Naive thymus-derived CD4-positive, alpha-beta T cell (primary cell): ENCODE measurements at regions of chr1 and their contacts with region 1.

Region 1: DNA sequence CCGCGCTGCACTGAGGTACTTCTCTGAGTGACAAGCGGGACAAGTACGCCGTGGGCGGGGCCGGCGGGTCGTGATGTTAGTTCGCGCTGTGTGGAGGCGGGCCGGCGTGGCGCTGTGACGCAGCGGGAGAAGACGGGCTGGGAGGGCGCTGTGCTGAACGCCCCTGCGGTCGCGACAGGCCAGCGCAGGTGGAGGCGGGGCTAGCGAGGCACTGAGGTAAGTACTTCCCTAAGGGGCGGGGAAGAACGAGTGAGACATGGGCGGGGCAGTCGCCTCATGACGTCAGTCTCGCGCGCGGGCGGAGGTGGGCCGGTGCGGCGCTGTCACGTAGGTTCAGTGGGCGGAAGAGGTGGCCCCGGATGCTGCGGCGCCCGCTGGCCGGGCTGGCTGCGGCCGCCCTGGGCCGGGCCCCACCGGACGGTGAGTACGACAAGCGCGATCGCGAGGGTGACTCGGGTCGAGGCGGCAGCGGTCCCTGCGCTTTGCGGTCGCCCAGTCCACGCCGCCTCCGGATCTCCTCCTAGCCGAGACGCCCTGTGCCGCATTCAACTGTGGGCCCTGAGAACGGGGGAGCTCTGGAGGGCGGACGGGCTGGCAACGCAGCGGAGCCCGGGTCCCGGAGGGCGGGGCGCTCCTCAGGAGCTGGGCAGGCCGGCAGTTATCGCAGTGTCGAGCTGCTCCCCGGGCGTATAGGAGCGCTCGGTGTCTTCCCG is at the start of gene GUK1:
- DNase-seq: peak; percentile 98 to 100 (median 100)
- ATAC-seq: peak; percentile 93
- H3K4me3 ChIP-seq: peak within 1 kb of the TSS; percentile 88
- H3K4me3 Mint-ChIP-seq: peak within 1 kb of the TSS; percentile 87 to 99 (median 95)
- H3K27ac ChIP-seq: peak within 1 kb of the TSS; percentile 99
- H3K27ac Mint-ChIP-seq: peak within 1 kb of the TSS; percentile 83 to 100 (median 99)
- H3K4me1 ChIP-seq: peaks cover 42 to 49% of the 10 kb centered on the region in 2 donors
- H3K4me1 Mint-ChIP-seq: peaks cover 23 to 48% (median 34%) of the 10 kb centered on the region in 7 donors
- H3K27me3 ChIP-seq: no peaks in the 10 kb centered on the region
- H3K27me3 Mint-ChIP-seq: peaks cover 0 to 24% (median 0%) of the 10 kb centered on the region in 5 donors
- total RNA-seq, gene GUK1: 145 to 309 (median 279) TPM

Region 2: DNA sequence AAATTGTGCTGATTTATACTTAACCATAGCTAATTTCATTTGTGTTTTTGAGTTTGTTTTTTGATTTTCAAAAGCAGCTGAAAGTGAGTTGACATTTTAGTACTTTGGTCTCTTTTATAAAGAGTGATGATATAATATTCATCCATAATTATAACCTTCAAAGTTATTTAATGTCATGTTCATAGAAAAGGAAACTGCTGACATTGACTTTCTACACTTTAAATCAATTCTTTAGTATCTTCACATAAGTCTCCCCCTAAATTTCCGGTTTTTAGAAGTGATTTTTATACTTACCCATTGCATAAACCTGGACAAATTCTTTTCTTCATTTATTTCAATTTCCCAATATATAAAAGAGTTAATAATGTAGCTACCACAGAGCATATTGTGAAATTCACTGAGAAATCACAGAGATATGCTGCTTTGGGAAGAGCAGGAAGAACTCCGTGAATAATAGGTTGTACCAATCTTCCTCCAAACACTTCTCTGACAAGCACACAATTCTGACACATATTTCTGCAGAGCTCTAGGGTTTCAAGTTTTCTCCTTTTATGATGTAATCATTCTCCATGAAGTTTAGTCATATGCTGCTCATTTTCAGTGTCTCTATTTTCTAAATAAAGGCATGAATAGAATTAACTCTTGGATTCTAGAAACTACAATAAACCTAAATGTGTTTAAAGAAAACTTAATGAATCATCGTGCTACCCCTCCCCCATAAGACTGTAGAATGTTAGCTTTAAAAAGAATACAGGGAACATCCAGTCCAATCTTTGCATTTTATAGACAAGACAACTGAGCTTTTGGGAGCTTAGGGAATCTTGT is 796.2 kb before region 1 on chr1:
- CTCF ChIA-PET with region 1: no interaction called
- POLR2A ChIA-PET with region 1: no interaction called
- intact Hi-C with region 1: no loop called
- DNase-seq: no peak
- ATAC-seq: no peak
- H3K4me3 ChIP-seq: no peak overlapping the region
- H3K4me3 Mint-ChIP-seq: no peak overlapping the region
- H3K27ac ChIP-seq: no peak overlapping the region
- H3K27ac Mint-ChIP-seq: no peak overlapping the region
- H3K4me1 ChIP-seq: no peaks in the 10 kb centered on the region
- H3K4me1 Mint-ChIP-seq: no peaks in the 10 kb centered on the region
- H3K27me3 ChIP-seq: no peaks in the 10 kb centered on the region
- H3K27me3 Mint-ChIP-seq: peaks cover 0 to 7% (median 5%) of the 10 kb centered on the region in 5 donors

Region 3: DNA sequence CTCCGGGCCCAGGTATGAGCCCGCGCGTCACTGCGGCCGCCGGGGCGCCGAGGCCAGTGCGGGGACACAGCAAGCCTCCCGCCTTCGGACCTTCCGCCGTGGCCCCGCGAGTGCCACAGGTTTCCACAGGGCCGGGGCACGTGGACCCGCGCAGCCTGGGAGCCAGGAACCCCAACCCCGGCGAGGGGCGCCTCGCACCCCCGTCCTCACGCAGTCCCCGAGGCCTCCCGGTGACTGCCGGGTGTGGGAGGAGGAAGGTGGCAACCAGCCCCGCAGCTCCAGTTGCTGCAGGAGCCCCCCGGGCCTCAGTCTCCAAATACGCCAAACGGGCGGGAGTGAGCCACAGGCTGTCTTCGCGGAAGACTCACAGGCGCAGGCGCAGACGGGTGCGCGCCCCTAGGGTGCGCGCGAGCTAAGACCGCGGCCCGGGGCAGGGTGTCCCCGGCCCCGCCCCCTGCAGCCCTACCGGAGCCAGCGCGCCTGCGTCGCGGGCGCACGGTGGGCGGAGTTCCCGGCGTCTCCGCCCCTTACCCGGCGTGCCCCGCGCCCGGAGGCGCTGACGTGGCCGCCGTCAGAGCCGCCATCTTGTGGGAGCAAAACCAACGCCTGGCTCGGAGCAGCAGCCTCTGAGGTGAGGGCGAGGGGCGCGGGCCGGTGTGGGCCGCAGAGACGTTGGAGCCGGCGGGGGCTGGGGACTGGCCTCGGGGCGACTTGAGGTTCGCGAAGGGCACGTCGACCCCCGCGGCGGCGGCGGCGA is 57.8 kb before region 1 on chr1 and contains the start of gene ARF1:
- CTCF ChIA-PET with region 1: no interaction called
- POLR2A ChIA-PET with region 1: interaction called, 7 read pairs
- intact Hi-C with region 1: loop called (anchors 1 kb)
- DNase-seq: peak; percentile 89 to 99 (median 96)
- ATAC-seq: peak; percentile 97
- H3K4me3 ChIP-seq: peak within 1 kb of the TSS; percentile 88
- H3K4me3 Mint-ChIP-seq: peak within 1 kb of the TSS; percentile 89 to 97 (median 95)
- H3K27ac ChIP-seq: peak within 1 kb of the TSS; percentile 97
- H3K27ac Mint-ChIP-seq: peak within 1 kb of the TSS; percentile 76 to 97 (median 95)
- H3K4me1 ChIP-seq: peaks cover 41 to 43% of the 10 kb centered on the region in 2 donors
- H3K4me1 Mint-ChIP-seq: peaks cover 36 to 66% (median 52%) of the 10 kb centered on the region in 7 donors
- H3K27me3 ChIP-seq: no peaks in the 10 kb centered on the region
- H3K27me3 Mint-ChIP-seq: no peaks in the 10 kb centered on the region
- total RNA-seq, gene ARF1: 198 to 390 (median 259) TPM

Region 4: GRCh38 chr1:228109073-228109961 is 30.8 kb before region 1 on chr1 and contains the start of gene MRPL55:
- CTCF ChIA-PET with region 1: no interaction called
- POLR2A ChIA-PET with region 1: interaction called, 8 read pairs
- intact Hi-C with region 1: loop called (anchors 1 kb)
- DNase-seq: peak; percentile 97 to 100 (median 99)
- ATAC-seq: peak; percentile 99
- H3K4me3 ChIP-seq: peak within 1 kb of the TSS; percentile 100
- H3K4me3 Mint-ChIP-seq: peak within 1 kb of the TSS; percentile 87 to 95 (median 93)
- H3K27ac ChIP-seq: peak within 1 kb of the TSS; percentile 94
- H3K27ac Mint-ChIP-seq: peak within 1 kb of the TSS; percentile 88 to 98 (median 95)
- H3K4me1 ChIP-seq: peaks cover 9 to 16% of the 10 kb centered on the region in 2 donors
- H3K4me1 Mint-ChIP-seq: peaks cover 5 to 37% (median 26%) of the 10 kb centered on the region in 7 donors
- H3K27me3 ChIP-seq: no peaks in the 10 kb centered on the region
- H3K27me3 Mint-ChIP-seq: peaks cover 0 to 3% (median 0%) of the 10 kb centered on the region in 5 donors
- total RNA-seq, gene MRPL55: 34.3 to 79.3 (median 65.2) TPM

Region 5: DNA sequence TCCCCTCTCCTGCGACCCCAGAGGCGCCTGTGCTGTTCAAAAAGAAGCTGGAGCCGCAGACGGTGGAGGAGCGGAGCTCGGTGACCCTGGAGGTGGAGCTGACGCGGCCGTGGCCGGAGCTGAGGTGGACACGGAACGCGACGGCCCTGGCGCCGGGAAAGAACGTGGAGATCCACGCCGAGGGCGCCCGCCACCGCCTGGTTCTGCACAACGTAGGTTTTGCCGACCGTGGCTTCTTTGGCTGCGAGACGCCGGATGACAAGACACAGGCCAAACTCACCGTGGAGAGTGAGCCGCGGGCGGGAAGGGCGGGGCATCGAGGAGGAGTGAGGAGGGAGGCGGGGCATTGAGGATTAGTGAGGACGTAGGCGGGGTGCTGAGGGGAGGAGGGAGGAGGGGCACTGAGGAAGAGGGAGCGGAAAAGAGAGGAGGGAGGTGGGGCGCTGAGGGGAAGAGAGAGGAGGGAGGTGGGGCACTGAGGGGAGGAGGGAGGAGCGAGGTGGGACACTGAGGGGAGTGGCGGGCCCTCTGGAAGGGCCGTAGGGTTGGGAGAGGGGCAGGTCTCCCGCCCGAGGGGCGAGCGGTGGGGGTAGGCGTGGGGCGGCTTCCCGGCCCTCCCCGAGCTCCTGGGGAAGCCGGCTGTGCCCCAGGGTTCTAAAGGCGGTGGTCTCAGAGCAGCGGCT is 135.8 kb after region 1 on chr1:
- CTCF ChIA-PET with region 1: no interaction called
- POLR2A ChIA-PET with region 1: no interaction called
- intact Hi-C with region 1: loop called in 1 of 2 experiments (anchors 1 kb)
- DNase-seq: peak; percentile 53 to 88 (median 82)
- ATAC-seq: peak; percentile 96
- H3K4me3 ChIP-seq: peak overlapping the region; percentile 77
- H3K4me3 Mint-ChIP-seq: peak overlapping the region; percentile 71 to 88 (median 82)
- H3K27ac ChIP-seq: peak overlapping the region; percentile 77
- H3K27ac Mint-ChIP-seq: peak overlapping the region in 7 of 9 donors; percentile 21 to 73 (median 60)
- H3K4me1 ChIP-seq: no peaks in the 10 kb centered on the region
- H3K4me1 Mint-ChIP-seq: peaks cover 8 to 20% (median 19%) of the 10 kb centered on the region in 7 donors
- H3K27me3 ChIP-seq: no peaks in the 10 kb centered on the region
- H3K27me3 Mint-ChIP-seq: no peaks in the 10 kb centered on the region

Region 6: DNA sequence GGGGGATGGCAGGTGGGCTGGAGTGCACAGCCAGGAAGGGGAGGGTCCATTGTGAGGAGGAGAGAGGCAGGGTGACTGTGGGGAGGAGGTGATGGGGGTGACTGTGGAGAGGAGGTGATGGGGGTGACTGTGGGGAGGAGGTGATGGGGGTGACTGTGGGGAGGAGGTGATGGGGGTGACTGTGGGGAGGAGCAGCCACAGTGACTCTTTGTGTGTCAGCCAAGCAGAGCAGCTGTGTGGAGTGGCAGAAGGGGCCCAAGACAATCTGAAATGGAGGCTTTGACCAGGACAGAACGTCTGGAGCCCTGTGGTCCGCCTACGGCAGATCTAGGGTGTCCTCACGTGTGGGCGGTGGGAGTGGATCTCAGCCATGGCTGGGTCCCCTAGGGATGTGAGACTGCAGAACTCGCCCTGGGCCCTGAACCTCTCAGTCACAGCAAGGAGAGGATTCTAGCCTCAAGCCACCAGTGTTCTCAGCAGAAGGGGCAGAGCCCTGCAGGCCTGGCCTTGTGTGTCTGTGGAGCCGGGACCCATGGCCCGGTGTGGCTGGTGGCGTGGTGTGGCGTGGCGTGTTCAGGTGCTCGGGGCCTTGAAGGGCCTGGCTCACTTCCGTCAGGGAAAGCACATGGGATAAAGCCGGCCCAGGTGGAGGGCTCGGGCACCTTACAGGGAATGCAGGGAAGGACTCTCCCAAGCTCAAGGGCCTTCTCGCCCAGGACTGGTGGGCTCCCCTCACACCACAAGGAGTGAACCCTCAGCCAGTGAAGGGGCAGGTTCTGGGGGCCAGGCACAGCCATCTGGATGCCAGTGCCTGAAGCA is 149.3 kb after region 1 on chr1:
- CTCF ChIA-PET with region 1: no interaction called
- POLR2A ChIA-PET with region 1: no interaction called
- intact Hi-C with region 1: no loop called
- DNase-seq: peak in 1 of 9 donors; percentile 6
- ATAC-seq: no peak
- H3K4me3 ChIP-seq: no peak overlapping the region
- H3K4me3 Mint-ChIP-seq: no peak overlapping the region
- H3K27ac ChIP-seq: no peak overlapping the region
- H3K27ac Mint-ChIP-seq: peak overlapping the region in 1 of 9 donors; percentile 38
- H3K4me1 ChIP-seq: no peaks in the 10 kb centered on the region
- H3K4me1 Mint-ChIP-seq: peaks cover 0 to 10% (median 0%) of the 10 kb centered on the region in 7 donors
- H3K27me3 ChIP-seq: no peaks in the 10 kb centered on the region
- H3K27me3 Mint-ChIP-seq: no peaks in the 10 kb centered on the region

Region 7: DNA sequence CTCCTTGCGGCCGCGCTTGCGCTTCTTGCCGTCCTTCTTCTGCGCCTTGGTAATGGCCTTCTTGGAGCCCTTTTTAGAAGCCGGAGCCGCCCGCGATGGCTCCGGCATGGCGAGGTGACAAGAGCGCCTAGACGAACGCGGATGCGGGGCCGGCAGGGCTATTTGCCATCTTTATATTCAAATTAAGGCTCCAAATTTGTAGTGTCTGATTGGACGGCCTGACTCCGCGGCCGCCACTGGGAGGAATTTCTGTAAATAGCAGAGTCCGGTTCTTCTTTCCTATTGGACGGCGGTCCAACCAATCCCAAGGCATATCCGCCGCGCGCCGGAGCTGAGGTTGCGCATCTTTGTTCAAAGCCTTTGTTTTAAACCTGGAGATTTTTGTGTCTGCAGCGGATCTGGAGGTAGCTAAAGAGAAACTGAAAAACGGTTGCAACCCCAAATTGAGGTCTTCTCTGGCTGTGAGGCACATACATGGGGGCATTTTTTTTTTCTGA is 324.4 kb after region 1 on chr1:
- CTCF ChIA-PET with region 1: no interaction called
- POLR2A ChIA-PET with region 1: no interaction called
- intact Hi-C with region 1: loop called in 1 of 2 experiments (anchors 2 kb)
- DNase-seq: peak; percentile 56 to 93 (median 85)
- ATAC-seq: peak; percentile 98
- H3K4me3 ChIP-seq: peak overlapping the region; percentile 62
- H3K4me3 Mint-ChIP-seq: peak overlapping the region; percentile 73 to 93 (median 82)
- H3K27ac ChIP-seq: peak overlapping the region; percentile 50
- H3K27ac Mint-ChIP-seq: peak overlapping the region; percentile 13 to 92 (median 62)
- H3K4me1 ChIP-seq: peaks cover 17 to 18% of the 10 kb centered on the region in 2 donors
- H3K4me1 Mint-ChIP-seq: peaks cover 24 to 66% (median 40%) of the 10 kb centered on the region in 7 donors
- H3K27me3 ChIP-seq: no peaks in the 10 kb centered on the region
- H3K27me3 Mint-ChIP-seq: peaks cover 11 to 34% (median 24%) of the 10 kb centered on the region in 5 donors

Region 8: DNA sequence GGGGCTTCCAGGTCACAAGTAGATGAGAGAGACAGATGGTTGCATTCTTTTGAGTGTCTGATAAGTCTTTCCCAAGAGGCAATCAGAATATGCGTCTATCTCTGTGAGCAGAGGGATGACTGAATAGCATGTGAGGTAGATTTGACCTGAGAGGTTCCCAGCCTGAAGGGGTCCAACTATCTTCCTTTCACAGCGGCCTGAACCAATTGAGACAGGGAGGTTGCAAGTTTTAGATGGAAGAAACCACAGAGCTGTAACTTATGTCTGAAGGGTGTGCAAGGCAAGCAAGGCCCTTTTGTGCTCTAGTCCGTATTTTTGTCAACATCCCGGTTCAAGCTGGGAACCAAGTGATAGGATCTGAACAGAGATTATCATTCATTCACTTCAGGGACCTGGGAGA is 337.2 kb after region 1 on chr1:
- CTCF ChIA-PET with region 1: no interaction called
- POLR2A ChIA-PET with region 1: no interaction called
- intact Hi-C with region 1: no loop called
- DNase-seq: no peak
- ATAC-seq: no peak
- H3K4me3 ChIP-seq: no peak overlapping the region
- H3K4me3 Mint-ChIP-seq: no peak overlapping the region
- H3K27ac ChIP-seq: no peak overlapping the region
- H3K27ac Mint-ChIP-seq: no peak overlapping the region
- H3K4me1 ChIP-seq: peaks cover 0 to 23% of the 10 kb centered on the region in 2 donors
- H3K4me1 Mint-ChIP-seq: peaks cover 0 to 44% (median 8%) of the 10 kb centered on the region in 7 donors
- H3K27me3 ChIP-seq: no peaks in the 10 kb centered on the region
- H3K27me3 Mint-ChIP-seq: peaks cover 0 to 6% (median under 1%) of the 10 kb centered on the region in 5 donors